Right ventricle myocardium superior (tissue), 1 donor: ENCODE measurements at regions of chr13 and their contacts with region 1.

Region 1: DNA sequence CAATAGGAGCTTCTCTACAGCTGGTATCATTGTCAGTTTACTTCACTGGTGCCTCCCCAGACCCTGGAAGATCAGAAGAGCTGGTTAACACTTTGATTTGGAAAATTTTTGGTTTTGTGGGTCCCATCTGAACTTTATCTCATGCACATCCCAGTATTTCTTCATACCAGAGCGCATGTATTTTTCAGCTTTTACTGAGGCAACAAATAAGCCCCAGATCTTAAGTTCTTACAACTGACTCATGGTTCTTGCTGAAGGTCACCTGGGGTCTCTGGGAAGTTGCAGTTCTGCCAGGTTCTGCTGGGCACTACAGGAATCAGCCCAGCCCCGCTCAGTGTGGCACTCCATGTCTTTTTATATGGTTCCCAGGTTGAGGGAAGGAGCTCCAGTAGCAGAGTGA is 1249.9 kb downstream of the EFNB2 start:
- DNase-seq: no peak
- ATAC-seq: no peak

Region 2: GRCh38 chr13:105312906-105313305 is 27.4 kb after region 1 on chr13:
- intact Hi-C with region 1: loop called (anchors 2 kb)
- DNase-seq: no peak
- ATAC-seq: no peak

Region 3: DNA sequence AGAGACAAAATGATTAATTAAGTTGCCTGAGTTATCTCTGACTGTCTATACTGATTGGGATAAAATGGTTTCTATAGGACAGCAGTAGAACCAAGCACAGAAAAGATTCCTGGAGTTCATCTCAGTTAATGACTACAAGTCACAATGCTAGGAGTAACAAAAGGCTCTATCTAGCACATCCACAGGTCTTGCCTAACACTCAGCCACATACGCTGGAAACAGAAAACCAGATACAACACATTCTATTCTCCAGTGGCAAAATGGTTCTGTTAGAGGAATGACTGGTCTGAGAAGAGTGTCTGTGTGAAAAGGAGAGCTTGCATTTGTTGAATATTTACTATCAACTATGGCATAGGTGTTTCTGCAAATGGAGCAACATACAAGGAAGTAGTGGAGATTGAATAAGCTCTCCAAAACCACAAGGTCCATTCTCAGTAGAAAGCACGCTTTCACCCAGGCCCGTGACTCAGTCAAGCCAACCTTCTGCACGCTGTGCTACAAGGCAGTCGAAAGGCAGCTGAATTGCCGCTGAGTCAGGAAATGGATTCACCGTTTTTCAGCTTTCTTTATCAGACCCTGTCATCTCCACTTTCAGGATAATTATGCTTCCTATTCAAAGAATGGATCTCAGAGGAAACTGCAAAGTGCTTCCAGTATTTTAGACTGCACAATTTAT is 488.5 kb after region 1 on chr13:
- intact Hi-C with region 1: no loop called
- DNase-seq: no peak
- ATAC-seq: no peak